Spleen (tissue), 13 donors: ENCODE measurements at regions of chr14 and their contacts with region 1.

Region 1: DNA sequence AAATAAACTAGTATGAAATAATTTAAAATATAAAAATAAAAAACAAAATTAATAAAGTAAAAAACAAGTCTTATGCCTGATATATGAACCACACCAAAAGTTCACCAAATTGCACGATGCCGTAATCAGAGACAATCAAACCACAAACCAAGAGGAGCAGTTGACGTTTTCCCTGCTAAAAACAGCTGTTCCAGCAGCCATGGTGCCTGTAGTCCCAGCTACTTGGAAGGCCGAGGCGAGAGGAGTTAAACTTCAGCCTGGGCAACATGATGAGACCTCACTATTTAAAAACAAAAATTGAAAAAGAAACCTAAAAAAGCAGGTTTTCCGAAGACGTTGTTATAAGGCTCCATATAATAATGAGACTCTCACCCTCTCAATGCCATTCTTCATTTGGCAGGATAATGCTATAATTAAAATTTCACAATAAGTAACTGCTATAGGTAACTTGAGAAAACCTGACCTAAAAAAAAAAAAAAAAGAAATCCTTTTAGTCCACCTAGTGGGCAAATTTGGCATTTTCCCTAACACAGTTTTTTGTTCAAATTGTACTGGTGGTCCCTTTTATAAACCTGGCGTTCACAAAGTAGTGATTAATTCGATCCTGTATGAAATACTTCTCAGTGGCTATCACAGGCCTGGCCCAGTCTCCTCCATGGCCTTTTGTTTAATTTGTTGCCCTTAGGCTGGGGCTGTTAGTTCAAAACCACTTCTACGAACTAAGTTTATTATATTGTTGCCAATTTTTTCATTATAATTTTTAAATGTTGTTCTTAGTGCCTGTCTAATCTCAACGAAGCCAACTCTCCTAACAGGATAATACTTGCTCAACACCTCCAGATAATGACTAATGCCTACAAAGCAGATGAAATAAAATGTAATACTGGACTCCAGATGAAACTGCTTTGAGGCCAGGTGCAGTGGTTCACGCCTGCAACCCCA is 62.1 kb downstream of the TNFAIP2 start:
- DNase-seq: no peak
- H3K4me3 ChIP-seq: no peak overlapping the region
- H3K27ac ChIP-seq: no peak overlapping the region
- H3K4me1 ChIP-seq: peaks cover 0 to 15% (median 11%) of the 10 kb centered on the region in 6 donors
- H3K27me3 ChIP-seq: peaks cover 0 to 49% (median 18%) of the 10 kb centered on the region in 7 donors
- CTCF ChIP-seq: peak; percentile 47 to 79 (median 69)
- POLR2A ChIP-seq: no peak

Region 2: DNA sequence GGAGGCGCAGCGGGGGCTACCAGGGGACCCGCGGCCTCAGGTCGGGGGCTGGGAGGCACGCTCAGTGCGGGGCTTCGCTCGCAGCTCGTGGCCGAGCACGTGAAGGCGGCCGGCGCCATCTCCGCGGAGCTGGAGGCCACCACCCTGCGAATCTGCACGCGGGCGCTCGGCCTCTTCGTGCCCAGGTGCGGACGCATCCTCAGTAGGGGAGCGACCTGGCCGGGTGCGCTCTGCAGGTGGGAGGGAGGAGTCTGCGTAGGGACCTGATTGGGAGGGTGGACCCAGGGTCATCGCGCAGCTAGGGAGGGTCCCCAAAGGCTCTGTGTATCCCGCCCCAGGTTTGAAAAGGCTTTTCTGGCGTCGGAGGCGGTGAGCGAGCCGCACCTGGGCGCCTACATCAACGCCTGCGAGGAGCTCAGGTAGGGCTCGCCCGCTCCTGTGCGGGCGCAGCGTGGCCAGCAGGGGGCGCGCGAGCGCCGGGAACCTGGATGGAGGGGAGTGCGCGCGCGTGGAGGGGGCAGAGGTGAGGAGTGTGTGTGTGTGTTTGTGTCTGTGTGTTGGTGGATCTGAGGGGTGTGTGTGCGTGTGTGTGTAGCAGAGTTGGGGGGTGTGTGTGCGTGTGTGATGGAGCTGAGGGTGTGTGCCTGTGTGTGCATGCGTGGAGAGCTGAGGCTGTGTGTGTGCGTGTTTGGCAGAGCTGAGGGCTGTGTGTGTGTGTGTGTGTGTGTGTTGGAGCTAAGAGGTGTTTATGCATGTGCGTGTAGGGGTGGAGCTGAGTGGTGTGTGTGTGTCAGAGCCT is 80.5 kb before region 1 on chr14:
- intact Hi-C with region 1: loop called (anchors 10 kb)
- DNase-seq: peak; percentile 94
- H3K4me3 ChIP-seq: peak overlapping the region in 2 of 8 donors; percentile 17 to 58
- H3K27ac ChIP-seq: peak overlapping the region in 1 of 8 donors; percentile 40
- H3K4me1 ChIP-seq: peaks cover 12 to 69% (median 55%) of the 10 kb centered on the region in 6 donors
- H3K27me3 ChIP-seq: peaks cover 6 to 69% (median 33%) of the 10 kb centered on the region in 7 donors
- CTCF ChIP-seq: peak; percentile 93 to 98 (median 96)
- POLR2A ChIP-seq: no peak

Region 3: DNA sequence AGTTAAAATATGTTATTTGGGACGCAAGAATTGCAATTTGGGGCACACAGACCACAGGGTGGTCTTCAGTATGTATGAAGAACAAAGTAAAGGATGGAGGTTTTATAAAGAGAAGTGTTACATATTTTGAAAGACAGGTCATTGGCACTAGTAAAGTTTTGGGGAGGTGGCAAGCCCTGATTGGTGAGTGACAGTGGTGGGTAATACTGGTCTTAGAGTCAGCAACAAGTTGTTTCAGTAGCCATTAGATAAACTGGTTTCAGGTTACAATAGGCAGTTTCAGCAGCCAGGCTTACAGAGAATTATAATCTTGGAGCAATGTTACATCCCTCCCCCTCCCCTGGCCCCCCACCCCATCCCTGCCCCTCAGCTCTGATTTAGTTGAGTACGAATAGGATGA is 217.4 kb after region 1 on chr14:
- intact Hi-C with region 1: no loop called
- DNase-seq: no peak
- H3K4me3 ChIP-seq: no peak overlapping the region
- H3K27ac ChIP-seq: peak overlapping the region in 3 of 8 donors; percentile 16 to 83 (median 63)
- H3K4me1 ChIP-seq: peaks cover 37 to 91% (median 73%) of the 10 kb centered on the region in 6 donors
- H3K27me3 ChIP-seq: no peaks in the 10 kb centered on the region
- CTCF ChIP-seq: no peak
- POLR2A ChIP-seq: no peak